ENCODE measurements at regions of chr9 and their contacts with region 1.

Region 1: DNA sequence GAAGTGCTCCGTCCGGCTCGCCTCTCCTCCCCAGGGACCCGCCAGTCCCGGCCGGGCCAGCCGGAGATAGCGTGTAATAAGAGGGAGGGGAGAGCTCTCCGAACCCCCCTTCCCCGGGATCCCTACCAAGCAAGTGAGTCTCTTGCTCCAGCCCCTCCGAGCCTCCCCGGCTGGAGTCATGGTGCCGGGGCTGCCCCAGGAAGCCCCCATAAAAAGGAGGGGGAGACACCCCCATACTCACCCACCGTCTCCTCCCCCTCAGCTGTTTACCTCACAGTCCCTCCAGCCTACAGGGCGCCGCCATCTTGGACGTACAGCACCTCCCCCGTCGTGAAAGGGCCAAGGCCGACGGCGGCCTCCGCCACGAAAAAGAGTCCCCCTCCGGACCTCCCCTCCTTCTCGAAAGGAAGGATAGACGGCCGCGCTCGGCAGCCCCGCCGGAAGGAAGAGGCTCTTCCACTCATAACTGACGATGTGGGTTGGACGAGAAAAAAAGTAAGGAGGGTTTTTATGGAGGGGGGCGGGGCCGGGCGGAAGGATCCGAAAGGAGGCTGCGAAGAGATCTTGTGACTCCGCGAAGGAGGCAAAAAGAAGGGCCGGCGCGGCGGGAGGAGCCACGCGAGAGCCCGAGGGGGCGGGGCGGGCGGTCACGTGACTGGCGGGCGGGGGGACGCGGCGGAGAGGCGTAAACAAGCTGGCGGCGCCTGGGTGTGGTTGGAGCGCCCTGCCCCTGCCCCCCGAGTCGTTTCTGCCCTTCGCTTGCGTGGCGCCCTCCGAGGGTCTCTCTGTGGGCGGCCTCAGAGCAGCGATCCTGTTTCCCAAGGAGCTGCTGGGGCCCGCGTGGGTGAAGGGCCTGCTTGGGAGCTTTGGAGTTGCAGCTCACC is at the start of gene TSC1:
- DNase-seq: peak; percentile 96 to 99 (median 98)
- ATAC-seq: peak; percentile 83
- H3K4me3 ChIP-seq: peak within 1 kb of the TSS; percentile 98 to 99
- H3K4me3 Mint-ChIP-seq: peak within 1 kb of the TSS; percentile 97
- H3K27ac ChIP-seq: peak within 1 kb of the TSS; percentile 90 to 100
- H3K27ac Mint-ChIP-seq: peak within 1 kb of the TSS; percentile 100
- H3K4me1 ChIP-seq: peaks cover 17% of the 10 kb centered on the region
- H3K4me1 Mint-ChIP-seq: peaks cover 29% of the 10 kb centered on the region
- H3K27me3 ChIP-seq: no peaks in the 10 kb centered on the region
- H3K27me3 Mint-ChIP-seq: no peaks in the 10 kb centered on the region
- CTCF ChIP-seq: no peak
- total RNA-seq, gene TSC1: 45.6 to 51.1 TPM

Region 2: GRCh38 chr9:132669698-132670456 is 274.7 kb before region 1 on chr9 and contains the start of gene DDX31:
- CTCF ChIA-PET with region 1: interaction called, 3 read pairs
- POLR2A ChIA-PET with region 1: no interaction called
- intact Hi-C with region 1: loop called in 1 of 2 experiments (anchors 1 kb)
- DNase-seq: peak; percentile 79 to 94 (median 88)
- ATAC-seq: peak; percentile 77
- H3K4me3 ChIP-seq: peak within 1 kb of the TSS; percentile 100
- H3K4me3 Mint-ChIP-seq: peak within 1 kb of the TSS; percentile 91
- H3K27ac ChIP-seq: peak within 1 kb of the TSS; percentile 98 to 99
- H3K27ac Mint-ChIP-seq: peak within 1 kb of the TSS; percentile 97
- H3K4me1 ChIP-seq: peaks cover 22% of the 10 kb centered on the region
- H3K4me1 Mint-ChIP-seq: peaks cover 63% of the 10 kb centered on the region
- H3K27me3 ChIP-seq: no peaks in the 10 kb centered on the region
- H3K27me3 Mint-ChIP-seq: no peaks in the 10 kb centered on the region
- CTCF ChIP-seq: no peak
- total RNA-seq, gene DDX31: 14.1 to 15.6 TPM

Region 3: DNA sequence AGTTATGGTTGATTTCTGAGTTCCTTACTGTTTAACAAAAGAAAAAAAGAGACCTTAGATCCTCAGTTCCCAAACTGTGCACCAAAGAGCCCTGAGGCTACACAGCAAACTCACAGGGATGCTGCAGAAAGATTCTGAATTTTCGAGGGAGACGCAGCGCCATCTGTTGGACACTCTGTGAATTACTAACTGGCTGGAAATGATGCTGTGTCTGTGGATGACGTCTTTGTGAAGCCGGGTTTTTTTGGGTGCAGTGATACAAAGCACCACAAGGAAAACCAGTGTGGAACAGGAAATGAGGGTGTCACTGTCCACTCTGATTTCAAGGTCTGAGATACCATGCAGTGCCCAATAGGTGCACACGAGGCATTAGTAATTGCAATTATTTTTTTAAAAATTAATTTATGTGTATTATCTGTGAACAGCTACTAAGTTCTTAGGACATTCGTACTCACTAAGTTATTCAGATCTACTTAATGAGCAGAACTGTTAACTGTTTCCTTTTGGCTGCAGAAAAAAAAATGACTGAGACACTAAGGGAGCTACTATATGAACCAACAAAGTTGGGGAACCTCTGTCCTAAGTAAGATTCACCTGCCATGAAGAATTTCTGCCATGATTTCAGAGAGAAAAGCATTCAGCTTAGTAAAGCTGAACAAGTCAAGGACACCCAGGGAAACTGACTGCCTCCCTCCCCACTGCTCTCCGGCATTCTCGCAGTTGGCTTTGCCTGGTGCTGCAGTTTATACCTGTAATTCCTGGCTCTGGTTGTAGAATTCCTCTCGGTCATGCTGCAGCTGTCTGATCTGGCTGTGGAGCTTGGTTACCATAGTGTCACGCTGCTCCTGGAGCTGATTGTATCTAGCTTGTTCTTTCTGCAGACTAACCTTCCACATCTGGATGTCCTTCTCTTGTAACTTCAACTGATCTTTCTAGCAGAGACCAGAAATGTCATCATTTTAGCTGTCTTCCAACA is 42.4 kb before region 1 on chr9:
- CTCF ChIA-PET with region 1: interaction called, 5 read pairs
- POLR2A ChIA-PET with region 1: interaction called, 3 read pairs
- intact Hi-C with region 1: loop called in 1 of 2 experiments (anchors 1 kb)
- DNase-seq: peak; percentile 54 to 90 (median 76)
- ATAC-seq: peak; percentile 99
- H3K4me3 ChIP-seq: no peak overlapping the region
- H3K4me3 Mint-ChIP-seq: no peak overlapping the region
- H3K27ac ChIP-seq: no peak overlapping the region
- H3K27ac Mint-ChIP-seq: peak overlapping the region; percentile 19
- H3K4me1 ChIP-seq: no peaks in the 10 kb centered on the region
- H3K4me1 Mint-ChIP-seq: peaks cover 3% of the 10 kb centered on the region
- H3K27me3 ChIP-seq: no peaks in the 10 kb centered on the region
- H3K27me3 Mint-ChIP-seq: no peaks in the 10 kb centered on the region
- CTCF ChIP-seq: peak; percentile 91

Region 4: DNA sequence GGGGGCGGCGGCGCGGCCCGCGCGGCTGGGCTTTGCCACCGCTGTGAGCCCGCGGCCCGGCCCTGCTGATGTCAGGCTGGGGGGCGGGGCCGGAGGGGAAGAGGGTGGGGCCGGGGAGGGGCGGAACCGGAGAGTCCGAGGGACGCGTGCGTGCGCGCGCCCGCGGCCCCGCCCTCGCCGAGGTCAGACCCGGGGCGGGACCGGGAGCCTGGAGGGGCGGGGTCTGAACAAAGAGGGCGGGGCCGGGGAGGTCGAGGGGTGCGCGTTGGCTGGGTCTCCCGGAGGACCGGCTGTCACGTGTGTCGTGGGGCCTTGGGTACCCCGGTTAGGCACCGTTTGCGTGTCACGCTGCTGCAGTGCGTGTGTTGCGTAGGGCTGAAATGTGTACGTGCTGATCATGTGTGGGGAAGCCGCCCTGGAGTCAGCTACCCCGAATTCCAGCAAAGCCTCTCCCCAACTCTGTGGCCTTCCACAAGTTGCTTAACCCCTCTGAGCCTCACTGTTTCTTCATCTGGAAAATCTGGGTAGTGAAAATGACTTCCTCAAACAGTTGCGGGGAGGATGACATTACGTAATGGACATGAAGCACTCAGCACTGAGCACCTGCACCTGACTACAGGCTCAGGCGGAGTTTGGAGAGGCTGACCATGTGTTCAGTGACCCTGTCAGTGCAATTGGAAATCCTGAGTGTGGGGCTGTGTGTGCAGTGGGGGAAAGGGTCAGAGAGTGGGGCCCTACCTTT is 176.8 kb after region 1 on chr9 and contains the start of gene RALGDS:
- CTCF ChIA-PET with region 1: no interaction called
- POLR2A ChIA-PET with region 1: no interaction called
- intact Hi-C with region 1: loop called in 1 of 2 experiments (anchors 1 kb)
- DNase-seq: peak; percentile 84 to 95 (median 92)
- ATAC-seq: peak; percentile 83
- H3K4me3 ChIP-seq: peak within 1 kb of the TSS; percentile 41 to 53
- H3K4me3 Mint-ChIP-seq: peak within 1 kb of the TSS; percentile 84
- H3K27ac ChIP-seq: peak within 1 kb of the TSS; percentile 66 to 96
- H3K27ac Mint-ChIP-seq: peak within 1 kb of the TSS; percentile 98
- H3K4me1 ChIP-seq: peaks cover 63% of the 10 kb centered on the region
- H3K4me1 Mint-ChIP-seq: peaks cover 70% of the 10 kb centered on the region
- H3K27me3 ChIP-seq: no peaks in the 10 kb centered on the region
- H3K27me3 Mint-ChIP-seq: no peaks in the 10 kb centered on the region
- CTCF ChIP-seq: no peak
- total RNA-seq, gene RALGDS: 177 to 186 TPM

Region 5: DNA sequence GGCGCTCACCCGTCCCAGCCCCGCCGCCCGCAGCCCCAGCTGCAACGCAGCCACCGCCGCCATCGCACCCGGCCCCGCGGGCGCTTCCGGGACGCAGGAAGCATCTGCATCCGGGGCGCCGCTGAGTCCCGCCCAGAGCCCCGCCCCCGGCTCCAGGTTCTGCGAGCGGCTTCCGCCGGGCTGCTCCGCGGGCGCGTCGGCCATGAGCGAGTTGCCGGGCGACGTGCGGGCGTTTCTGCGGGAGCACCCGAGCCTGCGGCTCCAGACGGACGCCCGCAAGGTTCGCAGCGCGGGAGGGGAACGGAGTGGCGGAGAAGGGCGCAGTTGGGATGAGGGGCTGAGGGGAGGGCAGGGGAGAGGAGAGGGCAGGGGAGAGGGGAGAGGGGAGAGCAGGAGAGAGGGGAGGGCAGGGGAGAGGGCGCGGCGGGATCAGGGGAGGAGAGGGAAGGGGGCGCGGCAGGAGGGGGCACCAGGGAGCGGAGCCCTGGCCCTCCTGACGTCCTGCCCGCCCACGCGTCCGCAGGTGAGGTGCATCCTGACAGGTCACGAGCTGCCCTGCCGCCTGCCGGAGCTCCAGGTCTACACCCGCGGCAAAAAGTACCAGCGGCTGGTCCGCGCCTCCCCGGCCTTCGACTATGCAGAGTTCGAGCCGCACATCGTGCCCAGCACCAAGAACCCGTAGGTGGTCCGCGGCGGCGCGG is 412.0 kb after region 1 on chr9 and contains the starts of genes SURF1 and SURF2:
- CTCF ChIA-PET with region 1: no interaction called
- POLR2A ChIA-PET with region 1: no interaction called
- intact Hi-C with region 1: loop called in 1 of 2 experiments (anchors 1 kb)
- DNase-seq: peak; percentile 81 to 93 (median 91)
- ATAC-seq: peak; percentile 93
- H3K4me3 ChIP-seq: peak within 1 kb of the TSS; percentile 78 to 86
- H3K4me3 Mint-ChIP-seq: peak within 1 kb of the TSS; percentile 87
- H3K27ac ChIP-seq: peak within 1 kb of the TSS; percentile 72 to 77
- H3K27ac Mint-ChIP-seq: peak within 1 kb of the TSS; percentile 93
- H3K4me1 ChIP-seq: peaks cover 30% of the 10 kb centered on the region
- H3K4me1 Mint-ChIP-seq: peaks cover 36% of the 10 kb centered on the region
- H3K27me3 ChIP-seq: no peaks in the 10 kb centered on the region
- H3K27me3 Mint-ChIP-seq: no peaks in the 10 kb centered on the region
- CTCF ChIP-seq: no peak
- total RNA-seq, gene SURF1: 34.3 to 36.8 TPM
- total RNA-seq, gene SURF2: 18.6 to 21.9 TPM

Measured in CD8-positive, alpha-beta T cell (primary cell).